A549 (cell line): ENCODE measurements at regions of chr17 and their contacts with region 1.

Region 1: GRCh38 chr17:8409966-8410864 is 12.6 kb upstream of the RNF222 start:
- DNase-seq: peak; percentile 79 to 91
- ATAC-seq: peak; percentile 91 to 97
- H3K4me3 ChIP-seq: no peak overlapping the region
- H3K27ac ChIP-seq: no peak overlapping the region
- H3K4me1 ChIP-seq: peaks cover 6% of the 10 kb centered on the region; the same call in 2 of the 3 replicates
- CTCF ChIP-seq: peak; percentile 96
- EP300 ChIP-seq: no peak
- POLR2A ChIP-seq: no peak
- RAD21 ChIP-seq: peak; percentile 90

Region 2: DNA sequence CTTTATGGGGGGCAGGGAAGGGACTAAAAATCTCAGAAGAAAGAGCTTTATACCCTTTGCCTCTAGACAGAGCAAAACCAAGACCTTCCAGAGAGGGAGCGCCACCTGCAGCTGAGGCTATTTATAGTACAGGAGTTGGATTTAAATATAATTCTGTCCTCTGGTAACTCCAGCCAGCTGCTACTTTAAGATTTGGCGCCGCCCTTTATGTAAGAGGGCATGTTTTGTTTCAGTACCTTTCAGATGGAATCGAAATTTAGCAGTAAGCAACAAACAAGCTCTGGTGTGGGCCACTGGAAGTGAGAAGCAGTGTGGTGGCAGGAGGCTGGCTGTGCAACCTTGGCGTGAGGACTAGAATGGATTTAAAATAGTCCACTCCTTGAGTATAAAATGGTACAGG is 413.0 kb before region 1 on chr17:
- CTCF ChIA-PET with region 1: no interaction called
- POLR2A ChIA-PET with region 1: no interaction called
- DNase-seq: peak; percentile 67 to 68
- ATAC-seq: peak; percentile 94 to 95
- H3K4me3 ChIP-seq: no peak overlapping the region
- H3K27ac ChIP-seq: no peak overlapping the region
- H3K4me1 ChIP-seq: no peaks in the 10 kb centered on the region
- CTCF ChIP-seq: peak; percentile 70
- EP300 ChIP-seq: no peak
- POLR2A ChIP-seq: no peak
- RAD21 ChIP-seq: peak; percentile 40 to 44; a peak in 3 of 5 replicates

Region 3: GRCh38 chr17:8079291-8080207 is 330.7 kb before region 1 on chr17:
- CTCF ChIA-PET with region 1: no interaction called
- POLR2A ChIA-PET with region 1: no interaction called
- DNase-seq: peak; percentile 90 to 93
- ATAC-seq: peak; percentile 87 to 92
- H3K4me3 ChIP-seq: peak overlapping the region; percentile 58
- H3K27ac ChIP-seq: peak overlapping the region; percentile 70 to 89
- H3K4me1 ChIP-seq: peaks cover 10% of the 10 kb centered on the region
- CTCF ChIP-seq: peak; percentile 92
- EP300 ChIP-seq: no peak
- POLR2A ChIP-seq: peak; percentile 54
- RAD21 ChIP-seq: peak; percentile 69 to 72

Region 4: GRCh38 chr17:8345052-8345682 is 65.0 kb before region 1 on chr17:
- CTCF ChIA-PET with region 1: no interaction called
- POLR2A ChIA-PET with region 1: no interaction called
- DNase-seq: no peak
- ATAC-seq: peak; percentile 55 to 62
- H3K4me3 ChIP-seq: no peak overlapping the region
- H3K27ac ChIP-seq: no peak overlapping the region
- H3K4me1 ChIP-seq: no peaks in the 10 kb centered on the region
- CTCF ChIP-seq: no peak
- EP300 ChIP-seq: no peak
- POLR2A ChIP-seq: no peak
- RAD21 ChIP-seq: no peak

Region 5: GRCh38 chr17:8383143-8383822 is 26.9 kb before region 1 on chr17 and contains the start of gene RPL26:
- CTCF ChIA-PET with region 1: interaction called, 14 read pairs
- POLR2A ChIA-PET with region 1: interaction called, 5 read pairs
- DNase-seq: peak; percentile 97 to 99
- ATAC-seq: peak; percentile 91 to 93
- H3K4me3 ChIP-seq: peak within 1 kb of the TSS; percentile 97
- H3K27ac ChIP-seq: peak within 1 kb of the TSS; percentile 93 to 99
- H3K4me1 ChIP-seq: peaks cover 44% of the 10 kb centered on the region
- CTCF ChIP-seq: peak; percentile 99
- EP300 ChIP-seq: no peak
- POLR2A ChIP-seq: peak; percentile 98
- RAD21 ChIP-seq: peak; percentile 26 to 86
- polyA plus RNA-seq, gene RPL26: 6,286 and 7,141 TPM in 2 replicates

Region 6: GRCh38 chr17:8420041-8420934 is 10.1 kb after region 1 on chr17:
- CTCF ChIA-PET with region 1: interaction called, 40 read pairs
- POLR2A ChIA-PET with region 1: no interaction called
- DNase-seq: peak in 1 of 2 experiments; percentile 85
- ATAC-seq: peak; percentile 79 to 81
- H3K4me3 ChIP-seq: no peak overlapping the region
- H3K27ac ChIP-seq: peak overlapping the region in 1 of 2 experiments; percentile 5; a peak in 2 of 6 replicates
- H3K4me1 ChIP-seq: peaks cover 43% of the 10 kb centered on the region
- CTCF ChIP-seq: no peak
- EP300 ChIP-seq: peak in 1 of 2 experiments; percentile 43; a peak in 1 of 5 replicates
- POLR2A ChIP-seq: no peak
- RAD21 ChIP-seq: no peak

Region 7: DNA sequence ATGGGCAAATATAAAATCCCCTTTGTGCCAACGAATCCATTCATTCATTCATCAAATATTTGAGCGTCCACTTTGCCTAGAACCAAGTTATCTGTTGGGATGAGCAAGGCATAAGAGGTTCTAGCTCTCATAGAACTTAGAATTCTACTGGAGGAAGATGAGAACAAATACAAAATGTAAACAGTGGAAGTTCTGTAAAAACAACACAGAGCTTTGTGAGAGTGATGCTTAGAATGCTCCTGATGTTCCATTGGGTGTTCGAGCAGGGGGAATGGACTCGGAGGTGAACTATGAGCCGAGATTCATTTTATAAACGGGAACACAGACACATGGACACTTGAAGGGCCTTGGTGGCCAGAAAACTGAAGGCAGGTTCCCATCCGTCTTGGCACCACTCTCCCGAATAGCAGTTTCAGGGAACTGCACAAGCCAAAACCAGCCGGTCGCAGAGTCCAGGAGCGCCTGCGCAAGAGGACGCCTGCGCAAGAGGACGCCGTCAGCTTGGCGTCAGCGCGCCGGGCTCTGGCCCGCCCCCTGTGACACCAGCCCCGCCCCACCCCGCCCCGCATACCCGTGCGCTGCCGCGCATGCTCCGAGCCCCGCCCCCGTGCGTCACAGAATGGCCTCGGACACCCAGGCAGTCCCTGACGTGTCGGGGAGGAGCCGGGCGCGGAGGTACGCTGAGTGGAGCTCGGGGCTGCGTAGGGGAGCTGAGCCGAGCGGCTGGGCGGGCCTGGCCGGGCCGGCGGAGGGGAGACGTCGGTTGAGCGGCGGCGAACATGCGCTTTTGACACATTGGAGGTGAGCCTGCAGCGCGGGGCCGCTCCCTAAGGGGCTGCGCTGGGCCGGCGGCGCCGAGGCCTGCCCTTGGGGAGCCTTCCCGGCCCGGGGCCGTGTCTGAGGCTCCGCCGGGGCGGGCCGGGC is 25.3 kb after region 1 on chr17 and contains the start of gene NDEL1:
- CTCF ChIA-PET with region 1: interaction called, 24 read pairs
- POLR2A ChIA-PET with region 1: interaction called, 7 read pairs
- DNase-seq: peak; percentile 98 to 100
- ATAC-seq: peak; percentile 96 to 99
- H3K4me3 ChIP-seq: peak within 1 kb of the TSS; percentile 95
- H3K27ac ChIP-seq: peak within 1 kb of the TSS; percentile 94 to 95
- H3K4me1 ChIP-seq: peaks cover 10% of the 10 kb centered on the region; the same call in 2 of the 3 replicates
- CTCF ChIP-seq: no peak
- EP300 ChIP-seq: no peak
- POLR2A ChIP-seq: peak; percentile 84
- RAD21 ChIP-seq: no peak; a peak in 1 of 5 replicates
- polyA plus RNA-seq, gene NDEL1: 71.0 and 91.0 TPM in 2 replicates

Region 8: GRCh38 chr17:8649157-8650118 is 239.2 kb after region 1 on chr17:
- CTCF ChIA-PET with region 1: interaction called, 12 read pairs
- POLR2A ChIA-PET with region 1: no interaction called
- DNase-seq: no peak
- ATAC-seq: no peak
- H3K4me3 ChIP-seq: no peak overlapping the region
- H3K27ac ChIP-seq: no peak overlapping the region
- H3K4me1 ChIP-seq: peaks cover 6% of the 10 kb centered on the region; the same call in 1 of the 3 replicates
- CTCF ChIP-seq: no peak
- EP300 ChIP-seq: no peak
- POLR2A ChIP-seq: no peak
- RAD21 ChIP-seq: no peak

Region 9: GRCh38 chr17:8753976-8754440 is 343.8 kb after region 1 on chr17:
- CTCF ChIA-PET with region 1: interaction called, 15 read pairs
- POLR2A ChIA-PET with region 1: no interaction called
- DNase-seq: peak; percentile 64 to 65
- ATAC-seq: peak; percentile 84 to 89
- H3K4me3 ChIP-seq: no peak overlapping the region
- H3K27ac ChIP-seq: no peak overlapping the region
- H3K4me1 ChIP-seq: no peaks in the 10 kb centered on the region
- CTCF ChIP-seq: peak; percentile 66
- EP300 ChIP-seq: no peak
- POLR2A ChIP-seq: no peak
- RAD21 ChIP-seq: peak; percentile 41 to 53; a peak in 4 of 5 replicates